ENCODE measurements at regions of chr5 and their contacts with region 1.

Region 1: GRCh38 chr5:172770675-172771438 is at the start of gene DUSP1:
- DNase-seq: peak; percentile 96
- H3K4me3 Mint-ChIP-seq: peak within 1 kb of the TSS; percentile 90
- H3K27ac Mint-ChIP-seq: peak within 1 kb of the TSS; percentile 93
- H3K4me1 Mint-ChIP-seq: peaks cover 66% of the 10 kb centered on the region
- H3K27me3 Mint-ChIP-seq: no peaks in the 10 kb centered on the region
- total RNA-seq, gene DUSP1: 7.0 to 7.3 TPM

Region 2: DNA sequence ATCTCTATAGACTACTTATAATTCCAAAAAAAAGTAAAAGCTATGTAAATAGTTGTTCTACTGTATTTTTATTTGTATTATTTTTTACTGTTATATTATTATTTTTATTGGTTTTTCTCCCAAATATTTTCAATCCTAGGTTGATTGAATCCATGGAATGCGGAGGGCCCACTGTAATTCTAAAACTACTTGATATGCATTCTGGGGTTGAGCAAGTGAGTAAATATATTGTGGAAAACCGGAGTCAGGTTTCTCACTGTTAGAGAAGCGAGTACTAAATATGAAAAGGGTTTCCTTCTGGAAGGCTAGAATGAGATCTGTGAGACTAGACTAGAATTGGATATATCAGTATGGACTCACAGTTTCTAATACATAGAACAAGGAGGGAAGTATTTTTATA is 830.9 kb before region 1 on chr5:
- CTCF ChIA-PET with region 1: no interaction called
- intact Hi-C with region 1: no loop called
- DNase-seq: no peak
- H3K4me3 Mint-ChIP-seq: no peak overlapping the region
- H3K27ac Mint-ChIP-seq: no peak overlapping the region
- H3K4me1 Mint-ChIP-seq: peaks cover 29% of the 10 kb centered on the region
- H3K27me3 Mint-ChIP-seq: no peaks in the 10 kb centered on the region

Region 3: GRCh38 chr5:172833686-172834414 is 63.0 kb after region 1 on chr5 and contains the start of gene ERGIC1:
- CTCF ChIA-PET with region 1: interaction called, 12 read pairs
- intact Hi-C with region 1: loop called (anchors 1 kb)
- DNase-seq: peak; percentile 74
- H3K4me3 Mint-ChIP-seq: peak within 1 kb of the TSS; percentile 80
- H3K27ac Mint-ChIP-seq: peak within 1 kb of the TSS; percentile 71
- H3K4me1 Mint-ChIP-seq: peaks cover 41% of the 10 kb centered on the region
- H3K27me3 Mint-ChIP-seq: no peaks in the 10 kb centered on the region
- total RNA-seq, gene ERGIC1: 33.4 to 36.2 TPM

Region 4: DNA sequence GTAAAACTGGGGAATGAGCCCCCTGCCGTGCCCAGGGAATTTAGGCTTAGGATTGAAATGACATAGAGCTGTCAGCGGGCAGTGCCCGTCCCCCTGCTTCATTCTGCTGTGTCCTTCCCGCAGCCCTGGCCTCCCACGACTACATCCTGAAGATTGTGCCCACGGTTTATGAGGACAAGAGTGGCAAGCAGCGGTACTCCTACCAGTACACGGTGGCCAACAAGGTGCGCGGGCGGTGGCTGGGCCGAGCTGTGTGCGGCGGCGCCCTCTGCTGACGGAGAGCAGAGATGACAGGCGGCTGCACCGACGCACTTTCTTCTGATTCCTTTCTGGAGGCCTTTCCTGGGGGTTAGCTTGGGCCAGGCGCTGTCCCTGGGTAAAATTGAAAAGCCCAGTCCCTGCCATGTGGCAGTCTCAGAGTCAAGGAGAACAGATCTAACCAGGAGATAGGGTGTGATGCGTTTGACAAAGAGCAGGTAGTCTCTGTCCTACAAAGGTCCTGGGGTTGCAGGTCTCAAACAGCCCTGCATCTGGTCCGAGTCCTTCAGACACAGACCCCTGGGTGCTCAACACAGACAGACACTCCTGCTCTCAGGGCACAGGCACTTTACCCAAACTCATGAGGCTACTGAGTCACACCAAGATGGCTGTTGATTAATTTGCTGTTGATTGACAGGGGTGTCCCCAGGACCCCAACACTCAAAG is 161.6 kb after region 1 on chr5:
- CTCF ChIA-PET with region 1: interaction called, 10 read pairs
- intact Hi-C with region 1: loop called (anchors 1 kb)
- DNase-seq: peak; percentile 79
- H3K4me3 Mint-ChIP-seq: no peak overlapping the region
- H3K27ac Mint-ChIP-seq: no peak overlapping the region
- H3K4me1 Mint-ChIP-seq: no peaks in the 10 kb centered on the region
- H3K27me3 Mint-ChIP-seq: no peaks in the 10 kb centered on the region

Region 5: GRCh38 chr5:173035904-173036707 is 265.2 kb after region 1 on chr5:
- CTCF ChIA-PET with region 1: no interaction called
- intact Hi-C with region 1: loop called (anchors 5 kb)
- DNase-seq: peak; percentile 72
- H3K4me3 Mint-ChIP-seq: peak overlapping the region; percentile 74
- H3K27ac Mint-ChIP-seq: peak overlapping the region; percentile 97
- H3K4me1 Mint-ChIP-seq: peaks cover 63% of the 10 kb centered on the region
- H3K27me3 Mint-ChIP-seq: no peaks in the 10 kb centered on the region

Measured in activated naive CD4-positive, alpha-beta T cell treated with anti-CD3 and anti-CD28 coated beads for 36 hours (primary cell).